A549 (cell line): ENCODE measurements at regions of chr11 and their contacts with region 1.

Region 1: GRCh38 chr11:77457340-77457739 is 16.6 kb downstream of the PAK1 start:
- DNase-seq: no peak
- ATAC-seq: no peak
- H3K4me3 ChIP-seq: no peak overlapping the region
- H3K27ac ChIP-seq: no peak overlapping the region
- H3K4me1 ChIP-seq: peaks cover 18% of the 10 kb centered on the region
- CTCF ChIP-seq: no peak
- EP300 ChIP-seq: no peak
- POLR2A ChIP-seq: no peak
- RAD21 ChIP-seq: no peak

Region 2: DNA sequence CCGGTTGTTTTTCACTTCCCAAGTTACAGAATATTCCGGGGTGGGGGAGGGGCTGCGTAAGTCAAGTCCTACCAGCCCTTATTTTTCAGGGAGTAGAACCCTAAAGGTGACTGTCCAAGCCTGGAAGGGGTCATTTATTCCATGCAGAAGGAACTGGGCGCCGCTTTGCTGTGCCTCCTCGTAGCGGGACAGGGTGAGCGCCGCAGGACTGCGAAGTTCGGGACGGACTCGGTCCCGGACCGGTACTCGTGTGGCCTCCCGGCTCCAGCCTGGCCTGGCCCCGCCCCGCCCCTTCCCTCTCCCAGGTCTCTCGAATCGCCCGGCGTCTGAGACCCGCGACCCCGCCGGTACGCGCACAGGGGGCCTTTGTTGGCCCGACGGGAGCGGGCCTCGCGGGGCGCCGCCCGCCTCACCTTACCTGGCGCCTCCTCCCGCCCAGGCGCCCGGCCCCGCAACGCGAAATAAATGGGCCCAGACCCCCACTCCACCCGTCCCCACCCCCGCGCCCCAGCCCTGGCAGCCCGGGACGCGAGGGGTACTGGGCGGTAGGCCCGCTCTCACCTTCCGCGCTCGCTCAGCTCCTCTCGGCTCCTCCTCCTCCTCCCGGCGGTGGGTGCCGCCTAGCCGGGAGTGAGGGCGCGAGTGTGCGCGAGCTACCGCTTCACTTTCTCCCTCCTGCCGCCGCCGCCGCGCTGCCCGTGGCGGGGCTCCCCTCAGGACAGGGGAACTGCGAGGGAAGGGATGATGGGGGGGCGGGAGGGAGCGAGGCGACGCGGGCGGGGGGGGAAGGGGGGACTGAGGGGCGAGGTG is 15.9 kb after region 1 on chr11:
- CTCF ChIA-PET with region 1: interaction called, 17 read pairs
- POLR2A ChIA-PET with region 1: no interaction called
- DNase-seq: peak; percentile 15 to 31
- ATAC-seq: peak; percentile 70 to 86
- H3K4me3 ChIP-seq: peak overlapping the region; percentile 85
- H3K27ac ChIP-seq: peak overlapping the region; percentile 86 to 91
- H3K4me1 ChIP-seq: no peaks in the 10 kb centered on the region
- CTCF ChIP-seq: no peak
- EP300 ChIP-seq: no peak
- POLR2A ChIP-seq: no peak
- RAD21 ChIP-seq: no peak